GM23248 (cell line): ENCODE measurements at regions of chr5 and their contacts with region 1.

Region 1: GRCh38 chr5:150458819-150459557 is 9.4 kb upstream of the RPS14 start:
- DNase-seq: peak; percentile 74
- H3K4me3 ChIP-seq: peak overlapping the region; percentile 63
- H3K27ac ChIP-seq: 0 out of 2 replicates have a peak overlapping the region, but pooled peaks have one; percentile 13
- H3K4me1 ChIP-seq: peaks cover 15% of the 10 kb centered on the region
- H3K27me3 ChIP-seq: no peaks in the 10 kb centered on the region

Region 2: GRCh38 chr5:150544611-150545219 is 85.7 kb after region 1 on chr5:
- in situ Hi-C with region 1: loop called (anchors 5 kb)
- DNase-seq: peak; percentile 74
- H3K4me3 ChIP-seq: no peak overlapping the region
- H3K27ac ChIP-seq: 0 out of 2 replicates have a peak overlapping the region, but pooled peaks have one; percentile 14
- H3K4me1 ChIP-seq: peaks cover 33% of the 10 kb centered on the region
- H3K27me3 ChIP-seq: no peaks in the 10 kb centered on the region

Region 3: DNA sequence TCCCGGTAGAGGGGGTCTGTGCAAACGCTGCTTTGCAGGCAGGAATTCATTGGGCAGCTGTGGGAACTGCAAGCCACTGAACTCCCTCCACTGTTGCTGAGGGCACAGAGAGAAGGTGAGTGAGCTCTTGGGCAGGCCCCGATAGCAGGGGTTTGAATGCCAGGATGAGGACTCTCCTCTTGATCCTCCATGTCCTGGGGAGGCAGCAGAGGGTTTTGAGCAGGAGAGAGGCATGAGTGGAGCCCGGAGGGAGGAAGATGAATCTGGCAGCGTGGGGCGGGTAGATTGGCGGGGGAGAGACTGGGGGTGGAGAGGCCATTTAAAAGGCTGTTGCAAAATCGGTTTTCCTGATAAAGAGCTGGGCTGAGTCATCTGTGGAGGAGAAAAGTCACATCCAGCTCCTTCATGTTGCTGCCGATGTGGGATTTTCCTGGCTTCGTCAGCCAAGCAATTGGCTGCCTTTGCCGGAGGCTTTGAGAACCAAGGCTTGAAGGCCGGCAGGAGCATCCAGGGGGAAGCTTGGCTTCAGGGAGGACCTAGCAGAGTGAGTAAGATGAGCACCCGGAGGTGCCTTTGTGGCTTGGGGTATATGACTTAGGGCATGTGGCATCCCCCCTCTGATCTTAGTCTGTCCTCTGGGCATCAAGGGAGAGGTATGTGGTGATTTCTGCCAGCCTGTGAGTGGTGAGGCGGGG is 181.5 kb after region 1 on chr5 and contains the start of gene SYNPO:
- in situ Hi-C with region 1: loop called (anchors 10 kb)
- DNase-seq: peak; percentile 99
- H3K4me3 ChIP-seq: peak within 1 kb of the TSS; percentile 47
- H3K27ac ChIP-seq: peak within 1 kb of the TSS; percentile 89
- H3K4me1 ChIP-seq: peaks cover 84% of the 10 kb centered on the region
- H3K27me3 ChIP-seq: no peaks in the 10 kb centered on the region
- total RNA-seq, gene SYNPO: 6.1 and 7.7 TPM in 2 replicates